IMR-90 (cell line): ENCODE measurements at regions of chr6 and their contacts with region 1.

Region 1: DNA sequence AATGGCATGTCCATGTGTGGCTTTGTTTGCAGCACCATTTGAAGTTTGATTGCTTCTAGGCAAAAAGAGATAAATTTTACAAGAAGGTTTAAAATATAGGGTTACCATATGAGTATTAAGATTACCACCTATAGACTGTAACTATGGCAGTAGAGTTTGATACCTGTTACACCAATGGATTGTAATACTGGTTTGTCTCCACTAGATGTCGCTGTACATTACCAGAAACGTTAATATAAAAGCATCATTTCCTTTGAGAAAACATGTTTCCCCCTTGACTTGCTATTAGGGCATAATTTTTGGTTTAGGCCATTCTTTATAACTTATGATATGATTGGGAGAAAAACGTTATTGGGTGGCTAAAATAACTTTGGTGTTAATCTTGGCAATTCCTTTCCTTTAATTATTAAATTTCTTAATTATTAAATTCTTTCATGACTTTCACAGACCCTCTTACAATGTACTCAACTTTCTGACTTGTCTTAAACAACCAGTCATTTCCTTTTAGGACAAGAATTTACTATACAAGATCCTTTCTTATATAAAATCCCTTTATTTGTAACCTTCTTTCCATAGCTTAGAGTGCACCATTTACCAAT is 42.8 kb downstream of the HLA-DPB1 start:
- DNase-seq: peak; percentile 49
- ATAC-seq: peak; percentile 72
- H3K4me3 ChIP-seq: no peak overlapping the region
- H3K27ac ChIP-seq: no peak overlapping the region
- H3K4me1 ChIP-seq: no peaks in the 10 kb centered on the region; the same call in 1 of the 2 replicates
- H3K27me3 ChIP-seq: peaks cover 52% of the 10 kb centered on the region
- CTCF ChIP-seq: peak; percentile 65
- POLR2A ChIP-seq: no peak
- RAD21 ChIP-seq: peak; percentile 56

Region 2: GRCh38 chr6:33147807-33148666 is 29.4 kb after region 1 on chr6:
- CTCF ChIA-PET with region 1: interaction called, 3 read pairs
- POLR2A ChIA-PET with region 1: no interaction called
- dilution Hi-C with region 1: no loop called
- in situ Hi-C with region 1: no loop called
- intact Hi-C with region 1: loop called (anchors 1 kb)
- DNase-seq: peak; percentile 58
- ATAC-seq: peak; percentile 90
- H3K4me3 ChIP-seq: no peak overlapping the region
- H3K27ac ChIP-seq: no peak overlapping the region
- H3K4me1 ChIP-seq: no peaks in the 10 kb centered on the region
- H3K27me3 ChIP-seq: peaks cover 16% of the 10 kb centered on the region
- CTCF ChIP-seq: peak; percentile 79
- POLR2A ChIP-seq: no peak
- RAD21 ChIP-seq: peak; percentile 65

Region 3: GRCh38 chr6:33172688-33173534 is 54.3 kb after region 1 on chr6:
- CTCF ChIA-PET with region 1: no interaction called
- POLR2A ChIA-PET with region 1: no interaction called
- dilution Hi-C with region 1: no loop called
- in situ Hi-C with region 1: no loop called
- intact Hi-C with region 1: loop called (anchors 1 kb)
- DNase-seq: peak; percentile 49
- ATAC-seq: peak; percentile 93
- H3K4me3 ChIP-seq: no peak overlapping the region
- H3K27ac ChIP-seq: no peak overlapping the region
- H3K4me1 ChIP-seq: no peaks in the 10 kb centered on the region
- H3K27me3 ChIP-seq: peaks cover 13% of the 10 kb centered on the region; the same call in 1 of the 2 replicates
- CTCF ChIP-seq: peak; percentile 77
- POLR2A ChIP-seq: no peak
- RAD21 ChIP-seq: peak; percentile 80

Region 4: DNA sequence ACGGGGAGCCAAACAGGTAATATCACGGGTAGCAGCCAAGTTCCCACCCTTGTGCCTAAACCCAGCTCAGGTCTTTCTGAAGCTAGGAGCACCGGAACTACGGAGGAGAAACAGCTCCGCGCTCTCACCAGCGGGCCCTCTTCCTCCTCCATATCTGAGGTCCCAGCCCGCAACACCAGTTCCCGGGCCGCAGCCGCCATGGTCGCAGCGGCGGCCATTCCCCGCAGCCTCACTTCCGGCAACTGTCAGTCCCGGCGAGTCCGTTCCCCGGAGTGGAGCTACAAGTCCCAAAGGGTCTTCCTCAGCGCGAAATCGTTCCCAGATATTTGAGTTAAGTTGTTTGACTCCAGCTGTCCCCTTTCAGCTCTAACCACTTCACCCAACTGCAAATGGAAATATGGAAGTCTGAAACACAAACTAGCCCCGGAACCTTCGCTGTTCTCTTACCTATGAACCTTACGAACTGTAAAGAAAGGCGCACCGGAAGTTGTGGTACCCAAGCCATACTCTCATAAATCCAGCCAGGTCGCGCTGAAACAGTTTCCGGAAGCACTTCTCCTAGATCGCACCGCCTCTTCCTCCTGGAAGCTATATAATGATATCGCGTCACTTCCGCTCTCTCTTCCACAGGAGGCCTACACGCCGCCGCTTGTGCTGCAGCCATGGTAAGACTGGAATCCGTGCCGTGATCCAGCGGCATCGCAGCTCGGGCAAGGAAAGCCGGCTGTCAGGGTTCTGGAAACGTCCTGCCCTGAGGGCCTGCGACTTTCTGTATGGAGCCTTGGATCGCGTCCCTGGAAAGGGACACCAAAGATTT is 153.0 kb after region 1 on chr6 and contains the starts of genes RPS18 and VPS52:
- CTCF ChIA-PET with region 1: no interaction called
- POLR2A ChIA-PET with region 1: no interaction called
- dilution Hi-C with region 1: no loop called
- in situ Hi-C with region 1: no loop called
- intact Hi-C with region 1: no loop called
- DNase-seq: peak; percentile 100
- ATAC-seq: peak; percentile 81
- H3K4me3 ChIP-seq: peak within 1 kb of the TSS; percentile 71
- H3K27ac ChIP-seq: peak within 1 kb of the TSS; percentile 89
- H3K4me1 ChIP-seq: peaks cover 13% of the 10 kb centered on the region
- H3K27me3 ChIP-seq: no peaks in the 10 kb centered on the region
- CTCF ChIP-seq: no peak
- POLR2A ChIP-seq: peak; percentile 99
- RAD21 ChIP-seq: no peak
- total RNA-seq, gene RPS18: 6,097 and 6,577 TPM in 2 replicates
- total RNA-seq, gene VPS52: 26.4 and 29.8 TPM in 2 replicates